ENCODE measurements at regions of chr16 and their contacts with region 1.

Region 1: DNA sequence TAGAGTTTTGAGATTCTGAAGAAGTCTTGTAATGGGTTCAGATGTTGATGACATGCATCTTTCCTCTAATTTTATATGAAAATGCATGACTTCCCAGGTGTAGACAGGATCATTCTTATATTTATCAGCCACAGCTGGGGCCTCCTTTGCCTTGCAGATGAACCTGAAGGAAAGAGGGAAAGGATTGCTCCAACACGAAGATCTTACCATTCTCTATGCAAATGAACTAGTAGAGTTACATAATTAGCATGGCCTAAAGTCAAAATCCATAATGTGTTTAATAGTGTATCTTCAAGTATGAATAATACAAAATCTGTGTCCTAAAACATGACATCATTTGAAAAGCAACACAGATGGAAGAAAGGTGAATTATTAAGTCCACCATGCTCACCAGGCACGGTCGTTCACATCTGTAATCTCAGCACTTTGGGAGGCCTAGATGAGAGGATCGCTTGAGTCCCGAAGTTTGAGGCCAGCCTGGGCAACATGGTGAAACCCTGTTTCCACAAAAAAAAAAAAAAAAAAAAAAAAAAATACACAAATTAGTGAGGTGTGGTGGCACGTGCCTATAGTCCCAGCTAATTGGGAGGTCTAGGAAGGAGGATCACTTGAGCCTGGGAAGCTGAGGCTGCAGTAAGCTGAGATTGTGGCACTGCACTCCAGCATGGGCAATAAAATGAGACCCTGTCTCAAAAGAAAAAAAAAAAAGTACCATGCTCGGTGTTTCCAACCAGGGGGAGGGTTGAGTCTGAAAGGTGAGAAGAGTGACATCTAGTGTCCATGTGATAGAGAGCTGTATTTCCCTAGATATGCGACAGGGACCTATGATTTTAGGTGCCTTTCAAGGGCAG is 6.3 kb downstream of the VWA3A start:
- DNase-seq: peak; percentile 82
- H3K4me3 ChIP-seq: no peak overlapping the region
- H3K27ac ChIP-seq: no peak overlapping the region
- H3K4me1 ChIP-seq: no peaks in the 10 kb centered on the region
- H3K27me3 ChIP-seq: no peaks in the 10 kb centered on the region
- CTCF ChIP-seq: peak; percentile 78

Region 2: GRCh38 chr16:21952793-21953540 is 145.7 kb before region 1 on chr16 and contains the start of gene UQCRC2:
- CTCF ChIA-PET with region 1: interaction called, 4 read pairs
- POLR2A ChIA-PET with region 1: interaction called, 10 read pairs
- intact Hi-C with region 1: no loop called
- DNase-seq: peak; percentile 95
- H3K4me3 ChIP-seq: peak within 1 kb of the TSS; percentile 74
- H3K27ac ChIP-seq: peak within 1 kb of the TSS; percentile 98
- H3K4me1 ChIP-seq: peaks cover 12% of the 10 kb centered on the region
- H3K27me3 ChIP-seq: no peaks in the 10 kb centered on the region
- CTCF ChIP-seq: no peak
- total RNA-seq, gene UQCRC2: 259 and 311 TPM in 2 replicates

Region 3: GRCh38 chr16:22001591-22001990 is 97.0 kb before region 1 on chr16:
- CTCF ChIA-PET with region 1: interaction called, 6 read pairs
- POLR2A ChIA-PET with region 1: no interaction called
- intact Hi-C with region 1: loop called (anchors 2 kb)
- DNase-seq: peak; percentile 34
- H3K4me3 ChIP-seq: no peak overlapping the region
- H3K27ac ChIP-seq: no peak overlapping the region
- H3K4me1 ChIP-seq: no peaks in the 10 kb centered on the region
- H3K27me3 ChIP-seq: no peaks in the 10 kb centered on the region
- CTCF ChIP-seq: no peak

Region 4: DNA sequence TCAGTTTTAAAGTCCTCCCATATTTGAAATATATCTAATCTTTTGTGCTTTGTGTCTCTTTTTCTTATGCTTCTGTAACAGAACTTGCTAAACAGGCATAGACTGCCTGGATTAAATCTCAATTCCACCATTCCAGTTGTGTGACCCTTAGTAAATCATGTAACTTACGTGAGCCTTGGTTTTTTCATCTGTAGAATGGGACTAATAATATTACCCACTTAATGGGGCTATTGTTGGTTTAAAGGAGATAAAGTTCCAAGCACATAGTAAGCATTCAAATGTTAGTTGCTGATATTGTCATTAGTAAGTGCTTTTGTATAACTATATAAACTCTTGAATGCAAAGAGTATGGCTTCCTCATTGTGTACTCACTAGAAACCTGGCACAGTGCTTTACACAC is 12.2 kb before region 1 on chr16:
- CTCF ChIA-PET with region 1: no interaction called
- POLR2A ChIA-PET with region 1: no interaction called
- intact Hi-C with region 1: no loop called
- DNase-seq: no peak
- H3K4me3 ChIP-seq: no peak overlapping the region
- H3K27ac ChIP-seq: no peak overlapping the region
- H3K4me1 ChIP-seq: no peaks in the 10 kb centered on the region
- H3K27me3 ChIP-seq: no peaks in the 10 kb centered on the region
- CTCF ChIP-seq: no peak

Region 5: GRCh38 chr16:22402191-22402590 is 303.6 kb after region 1 on chr16:
- CTCF ChIA-PET with region 1: no interaction called
- POLR2A ChIA-PET with region 1: no interaction called
- intact Hi-C with region 1: no loop called
- DNase-seq: peak; percentile 60
- H3K4me3 ChIP-seq: no peak overlapping the region
- H3K27ac ChIP-seq: peak overlapping the region; percentile 45
- H3K4me1 ChIP-seq: peaks cover 27% of the 10 kb centered on the region
- H3K27me3 ChIP-seq: no peaks in the 10 kb centered on the region
- CTCF ChIP-seq: no peak

Region 6: DNA sequence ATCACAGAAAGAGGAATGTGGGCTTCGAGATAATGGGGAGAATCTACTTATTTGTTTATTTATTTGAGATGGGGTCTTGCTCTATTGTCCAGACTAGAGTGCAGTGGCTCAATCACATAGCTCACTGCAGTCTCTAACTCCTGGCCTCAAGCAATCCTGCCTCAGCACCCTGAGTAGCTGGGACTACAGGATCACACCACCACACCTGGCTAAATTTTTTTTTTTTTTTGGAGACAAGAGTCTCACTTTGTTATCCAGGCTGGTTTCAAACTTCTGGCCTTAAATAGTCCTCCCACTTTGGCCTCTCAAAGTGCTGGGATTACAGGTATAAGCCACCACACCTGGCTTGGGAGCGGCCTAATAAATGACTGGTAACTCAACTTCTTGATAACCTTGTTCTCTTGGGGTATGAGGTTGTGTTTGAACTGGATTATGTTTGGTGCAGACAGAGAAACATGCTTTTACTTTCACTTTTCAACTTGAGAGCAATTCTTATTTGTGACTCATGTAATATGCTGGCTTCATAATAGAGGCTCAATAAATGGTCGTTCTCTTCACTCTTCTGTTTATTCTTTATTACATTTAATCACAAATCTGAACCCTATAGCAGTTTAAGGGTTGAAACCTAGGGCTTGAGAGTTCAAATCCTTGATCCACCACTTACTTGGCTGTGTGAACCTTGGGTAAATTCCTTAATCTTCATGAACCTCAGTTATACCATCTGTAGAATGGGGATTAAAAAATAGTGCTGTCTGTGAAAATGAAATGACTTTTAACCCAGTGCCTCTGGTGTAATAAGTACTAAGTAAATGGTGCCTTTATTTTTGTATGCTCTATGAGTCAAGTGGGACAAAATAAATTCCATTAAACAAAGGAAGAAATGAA is 586.2 kb after region 1 on chr16:
- CTCF ChIA-PET with region 1: no interaction called
- POLR2A ChIA-PET with region 1: no interaction called
- intact Hi-C with region 1: no loop called
- DNase-seq: no peak
- H3K4me3 ChIP-seq: no peak overlapping the region
- H3K27ac ChIP-seq: no peak overlapping the region
- H3K4me1 ChIP-seq: no peaks in the 10 kb centered on the region
- H3K27me3 ChIP-seq: peaks cover 7% of the 10 kb centered on the region
- CTCF ChIP-seq: no peak

Region 7: DNA sequence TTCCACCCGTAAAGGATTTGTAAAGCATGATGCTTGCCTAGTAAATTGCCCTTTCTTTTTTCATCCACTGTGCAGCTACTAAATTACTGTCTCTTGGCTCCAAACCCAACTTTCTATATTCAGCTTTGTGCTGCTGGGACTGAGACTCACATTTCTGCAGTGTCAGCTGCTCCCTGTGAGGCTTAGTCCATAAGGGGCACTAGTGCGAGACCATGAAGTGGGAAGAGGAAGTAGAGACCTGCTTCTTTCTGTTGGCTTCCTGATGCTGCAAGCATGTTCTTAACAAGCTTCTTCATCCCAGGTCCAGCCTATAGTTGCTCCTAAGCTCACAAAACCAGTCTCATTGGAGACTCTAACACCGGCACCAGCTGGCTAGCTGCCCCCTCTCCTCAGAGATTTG is 640.4 kb after region 1 on chr16:
- CTCF ChIA-PET with region 1: no interaction called
- POLR2A ChIA-PET with region 1: no interaction called
- intact Hi-C with region 1: no loop called
- DNase-seq: no peak
- H3K4me3 ChIP-seq: no peak overlapping the region
- H3K27ac ChIP-seq: no peak overlapping the region
- H3K4me1 ChIP-seq: no peaks in the 10 kb centered on the region
- H3K27me3 ChIP-seq: peaks cover 7% of the 10 kb centered on the region
- CTCF ChIP-seq: no peak